ENCODE measurements at regions of chr4 and their contacts with region 1.

Region 1: DNA sequence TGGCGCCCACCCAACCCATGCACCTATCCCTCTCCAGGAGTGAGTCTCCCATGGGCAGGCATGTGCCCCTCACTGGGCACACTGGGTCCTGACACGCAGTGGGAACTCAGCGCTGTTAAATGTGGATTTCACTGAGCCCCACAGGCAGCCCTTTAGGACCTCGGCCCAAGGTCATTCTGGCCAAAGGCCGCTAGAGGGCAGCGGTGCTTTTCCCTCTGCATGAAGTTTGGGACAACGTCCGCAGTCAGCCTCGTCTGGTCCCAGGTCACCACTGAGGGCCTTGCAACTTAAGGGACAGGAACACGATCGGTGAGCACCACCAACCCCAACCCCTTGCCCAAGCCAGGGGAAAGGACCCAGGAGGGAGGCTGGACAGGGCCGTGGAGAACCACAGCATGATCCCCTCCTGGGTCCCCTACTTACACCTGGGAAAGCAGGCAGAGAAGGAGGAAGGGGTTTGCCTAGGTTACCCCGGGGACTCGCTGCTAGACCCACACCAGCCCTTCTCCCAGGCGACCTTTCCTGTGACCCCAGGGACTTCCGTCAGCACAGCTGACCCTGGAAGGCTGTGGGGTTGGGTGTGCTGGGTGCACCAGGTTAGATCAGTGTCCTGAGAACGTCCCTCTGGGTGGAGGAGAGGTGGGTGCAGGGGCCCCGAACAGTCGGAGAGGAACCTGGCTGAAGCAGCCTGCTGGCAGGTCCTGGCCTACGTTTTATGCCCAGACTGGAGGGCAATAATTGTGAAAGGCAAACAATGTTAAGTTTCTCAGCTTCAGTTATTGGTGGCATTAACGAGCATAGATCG is 24.0 kb downstream of the CYTL1 start:
- DNase-seq: peak; percentile 51 to 55
- ATAC-seq: peak; percentile 34 to 55 (median 54)
- H3K4me3 ChIP-seq: no peak overlapping the region
- H3K4me3 Mint-ChIP-seq: no peak overlapping the region
- H3K27ac ChIP-seq: no peak overlapping the region
- H3K27ac Mint-ChIP-seq: no peak overlapping the region
- H3K4me1 ChIP-seq: peaks cover 21% of the 10 kb centered on the region
- H3K4me1 Mint-ChIP-seq: peaks cover 30 to 33% of the 10 kb centered on the region in 2 donors
- H3K27me3 ChIP-seq: no peaks in the 10 kb centered on the region
- H3K27me3 Mint-ChIP-seq: peaks cover 15 to 24% of the 10 kb centered on the region in 2 donors
- CTCF ChIP-seq: peak; percentile 87

Region 2: DNA sequence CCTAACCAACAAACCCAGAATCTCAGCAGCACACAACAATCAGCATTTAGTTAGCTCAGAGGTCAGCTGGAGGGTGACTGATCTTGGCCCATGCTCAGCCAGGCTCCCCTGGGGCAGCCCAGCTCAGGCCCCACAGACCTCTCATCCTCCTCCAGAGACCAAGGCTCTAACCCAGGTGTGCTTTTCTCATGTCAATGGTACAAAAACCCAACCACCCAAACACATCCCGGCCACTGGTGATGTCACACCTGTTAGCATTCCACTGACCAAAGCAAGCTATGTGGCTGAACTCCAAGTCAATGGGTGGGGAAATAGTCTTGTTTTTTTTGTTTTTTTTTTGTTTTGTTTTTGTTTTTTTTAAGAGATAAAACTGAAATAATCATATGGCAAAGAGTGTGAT is 53.6 kb before region 1 on chr4:
- intact Hi-C with region 1: loop called (anchors 5 kb)
- DNase-seq: no peak
- ATAC-seq: no peak
- H3K4me3 ChIP-seq: no peak overlapping the region
- H3K4me3 Mint-ChIP-seq: no peak overlapping the region
- H3K27ac ChIP-seq: no peak overlapping the region
- H3K27ac Mint-ChIP-seq: peak overlapping the region in 1 of 2 donors; percentile 95
- H3K4me1 ChIP-seq: peaks cover 26% of the 10 kb centered on the region
- H3K4me1 Mint-ChIP-seq: peaks cover 40 to 42% of the 10 kb centered on the region in 2 donors
- H3K27me3 ChIP-seq: no peaks in the 10 kb centered on the region
- H3K27me3 Mint-ChIP-seq: no peaks in the 10 kb centered on the region
- CTCF ChIP-seq: no peak

Region 3: DNA sequence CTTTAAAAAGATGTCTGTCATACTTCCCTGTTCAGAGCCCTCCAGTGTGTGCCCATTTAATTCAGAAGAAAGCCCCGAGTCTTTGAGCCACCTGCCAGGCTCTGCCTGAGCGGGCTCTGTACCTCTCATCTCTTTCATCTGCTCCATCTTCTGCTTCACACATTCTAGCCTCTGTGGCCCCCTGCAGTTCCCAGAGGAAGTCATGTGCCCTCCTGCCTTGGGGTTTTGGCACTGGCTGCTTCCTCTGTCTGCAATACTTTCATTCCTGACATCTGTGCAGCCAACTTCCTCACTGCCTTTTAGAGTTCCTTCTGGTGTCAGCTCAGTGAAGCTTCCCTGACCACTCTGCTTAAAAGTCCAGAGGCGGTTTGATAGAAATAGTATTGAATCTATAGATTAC is 49.8 kb after region 1 on chr4:
- intact Hi-C with region 1: no loop called
- DNase-seq: no peak
- ATAC-seq: peak in 1 of 3 donors; percentile 24
- H3K4me3 ChIP-seq: no peak overlapping the region
- H3K4me3 Mint-ChIP-seq: peak overlapping the region; percentile 10
- H3K27ac ChIP-seq: no peak overlapping the region
- H3K27ac Mint-ChIP-seq: no peak overlapping the region
- H3K4me1 ChIP-seq: peaks cover 13% of the 10 kb centered on the region
- H3K4me1 Mint-ChIP-seq: peaks cover 22 to 25% of the 10 kb centered on the region in 2 donors
- H3K27me3 ChIP-seq: no peaks in the 10 kb centered on the region
- H3K27me3 Mint-ChIP-seq: peaks cover 30 to 44% of the 10 kb centered on the region in 2 donors
- CTCF ChIP-seq: no peak

Region 4: GRCh38 chr4:5142726-5143125 is 147.4 kb after region 1 on chr4:
- intact Hi-C with region 1: loop called (anchors 10 kb)
- DNase-seq: peak in 1 of 2 donors; percentile 11
- ATAC-seq: no peak
- H3K4me3 ChIP-seq: no peak overlapping the region
- H3K4me3 Mint-ChIP-seq: no peak overlapping the region
- H3K27ac ChIP-seq: no peak overlapping the region
- H3K27ac Mint-ChIP-seq: no peak overlapping the region
- H3K4me1 ChIP-seq: no peaks in the 10 kb centered on the region
- H3K4me1 Mint-ChIP-seq: no peaks in the 10 kb centered on the region
- H3K27me3 ChIP-seq: no peaks in the 10 kb centered on the region
- H3K27me3 Mint-ChIP-seq: peaks cover 13 to 17% of the 10 kb centered on the region in 2 donors
- CTCF ChIP-seq: no peak

Region 5: GRCh38 chr4:5460116-5460801 is 465.0 kb after region 1 on chr4:
- intact Hi-C with region 1: loop called (anchors 2 kb)
- DNase-seq: peak in 1 of 2 donors; percentile 27
- ATAC-seq: no peak
- H3K4me3 ChIP-seq: no peak overlapping the region
- H3K4me3 Mint-ChIP-seq: no peak overlapping the region
- H3K27ac ChIP-seq: no peak overlapping the region
- H3K27ac Mint-ChIP-seq: no peak overlapping the region
- H3K4me1 ChIP-seq: no peaks in the 10 kb centered on the region
- H3K4me1 Mint-ChIP-seq: no peaks in the 10 kb centered on the region
- H3K27me3 ChIP-seq: no peaks in the 10 kb centered on the region
- H3K27me3 Mint-ChIP-seq: no peaks in the 10 kb centered on the region
- CTCF ChIP-seq: no peak

Region 6: GRCh38 chr4:5812506-5813229 is 817.4 kb after region 1 on chr4:
- intact Hi-C with region 1: loop called (anchors 10 kb)
- DNase-seq: peak in 1 of 2 donors; percentile 58
- ATAC-seq: peak in 2 of 3 donors; percentile 43 to 62
- H3K4me3 ChIP-seq: no peak overlapping the region
- H3K4me3 Mint-ChIP-seq: no peak overlapping the region
- H3K27ac ChIP-seq: no peak overlapping the region
- H3K27ac Mint-ChIP-seq: no peak overlapping the region
- H3K4me1 ChIP-seq: no peaks in the 10 kb centered on the region
- H3K4me1 Mint-ChIP-seq: no peaks in the 10 kb centered on the region
- H3K27me3 ChIP-seq: no peaks in the 10 kb centered on the region
- H3K27me3 Mint-ChIP-seq: peaks cover 0 to 6% of the 10 kb centered on the region in 2 donors
- CTCF ChIP-seq: peak; percentile 46